Prostate gland (tissue), 2 donors: ENCODE measurements at regions of chr4 and their contacts with region 1.

Region 1: GRCh38 chr4:176377780-176378179 is 58.0 kb downstream of the SPCS3 start:
- DNase-seq: no peak
- H3K4me3 ChIP-seq: no peak overlapping the region
- H3K27ac ChIP-seq: no peak overlapping the region
- H3K4me1 ChIP-seq: no peaks in the 10 kb centered on the region
- H3K27me3 ChIP-seq: no peaks in the 10 kb centered on the region
- CTCF ChIP-seq: peak in 3 of 4 experiments; percentile 15 to 62 (median 48)
- POLR2A ChIP-seq: no peak

Region 2: DNA sequence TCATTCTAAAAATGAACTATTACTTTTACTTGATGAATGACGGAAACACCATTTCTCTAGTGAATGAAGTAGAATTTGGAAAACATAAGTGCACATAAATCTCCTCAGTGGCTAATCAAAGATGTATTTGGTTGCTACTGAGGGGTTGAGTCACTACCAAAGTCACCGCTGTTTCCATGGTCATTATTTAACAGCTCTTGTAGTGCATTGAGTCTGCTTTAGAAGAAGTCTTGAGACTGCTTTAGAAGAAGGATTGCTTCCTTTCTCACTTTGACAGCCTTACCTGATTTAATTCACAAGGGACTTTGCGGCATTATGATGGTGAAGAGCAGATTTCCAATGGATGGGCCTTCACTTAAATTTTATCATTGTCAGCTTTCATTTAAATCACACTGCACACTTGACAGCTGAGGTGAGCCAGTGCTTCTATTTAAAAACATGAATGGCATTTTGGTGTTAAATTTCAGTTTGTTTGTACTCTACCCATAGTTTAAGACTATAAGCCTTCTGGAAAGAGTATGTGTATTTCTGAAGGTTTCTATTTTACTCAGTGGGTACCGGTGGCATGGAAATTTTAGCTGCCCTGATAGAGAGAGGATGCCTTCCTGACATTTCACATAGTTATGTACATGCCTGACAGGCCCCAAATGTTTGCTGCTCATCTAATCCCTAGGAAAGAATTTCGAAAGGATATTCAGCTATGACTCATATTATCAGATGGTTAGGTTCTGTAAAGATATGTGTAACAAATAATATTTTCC is 118.3 kb before region 1 on chr4:
- intact Hi-C with region 1: no loop called
- DNase-seq: no peak
- H3K4me3 ChIP-seq: no peak overlapping the region
- H3K27ac ChIP-seq: no peak overlapping the region
- H3K4me1 ChIP-seq: no peaks in the 10 kb centered on the region
- H3K27me3 ChIP-seq: no peaks in the 10 kb centered on the region
- CTCF ChIP-seq: no peak
- POLR2A ChIP-seq: no peak

Region 3: GRCh38 chr4:176302283-176303275 is 75.2 kb before region 1 on chr4:
- intact Hi-C with region 1: no loop called
- DNase-seq: no peak
- H3K4me3 ChIP-seq: no peak overlapping the region
- H3K27ac ChIP-seq: no peak overlapping the region
- H3K4me1 ChIP-seq: no peaks in the 10 kb centered on the region
- H3K27me3 ChIP-seq: no peaks in the 10 kb centered on the region
- CTCF ChIP-seq: no peak
- POLR2A ChIP-seq: no peak

Region 4: GRCh38 chr4:176789955-176790354 is 412.2 kb after region 1 on chr4:
- intact Hi-C with region 1: loop called (anchors 5 kb)
- DNase-seq: peak; percentile 26
- H3K4me3 ChIP-seq: no peak overlapping the region
- H3K27ac ChIP-seq: no peak overlapping the region
- H3K4me1 ChIP-seq: no peaks in the 10 kb centered on the region
- H3K27me3 ChIP-seq: no peaks in the 10 kb centered on the region
- CTCF ChIP-seq: peak in 3 of 4 experiments; percentile 30 to 60 (median 57)
- POLR2A ChIP-seq: no peak

Region 5: GRCh38 chr4:177339477-177340374 is 961.9 kb after region 1 on chr4:
- intact Hi-C with region 1: loop called (anchors 10 kb)
- DNase-seq: no peak
- H3K4me3 ChIP-seq: no peak overlapping the region
- H3K27ac ChIP-seq: no peak overlapping the region
- H3K4me1 ChIP-seq: no peaks in the 10 kb centered on the region
- H3K27me3 ChIP-seq: no peaks in the 10 kb centered on the region
- CTCF ChIP-seq: peak in 2 of 4 experiments; percentile 34 to 57
- POLR2A ChIP-seq: no peak